ENCODE measurements at regions of chr19 and their contacts with region 1.

Region 1: GRCh38 chr19:49097455-49098288 is 12.4 kb downstream of the SNRNP70 start:
- DNase-seq: peak; percentile 68
- ATAC-seq: peak; percentile 85 to 91
- H3K4me3 ChIP-seq: no peak overlapping the region
- H3K27ac ChIP-seq: no peak overlapping the region
- H3K4me1 ChIP-seq: peaks cover 8% of the 10 kb centered on the region
- H3K27me3 ChIP-seq: no peaks in the 10 kb centered on the region
- CTCF ChIP-seq: peak; percentile 99

Region 2: DNA sequence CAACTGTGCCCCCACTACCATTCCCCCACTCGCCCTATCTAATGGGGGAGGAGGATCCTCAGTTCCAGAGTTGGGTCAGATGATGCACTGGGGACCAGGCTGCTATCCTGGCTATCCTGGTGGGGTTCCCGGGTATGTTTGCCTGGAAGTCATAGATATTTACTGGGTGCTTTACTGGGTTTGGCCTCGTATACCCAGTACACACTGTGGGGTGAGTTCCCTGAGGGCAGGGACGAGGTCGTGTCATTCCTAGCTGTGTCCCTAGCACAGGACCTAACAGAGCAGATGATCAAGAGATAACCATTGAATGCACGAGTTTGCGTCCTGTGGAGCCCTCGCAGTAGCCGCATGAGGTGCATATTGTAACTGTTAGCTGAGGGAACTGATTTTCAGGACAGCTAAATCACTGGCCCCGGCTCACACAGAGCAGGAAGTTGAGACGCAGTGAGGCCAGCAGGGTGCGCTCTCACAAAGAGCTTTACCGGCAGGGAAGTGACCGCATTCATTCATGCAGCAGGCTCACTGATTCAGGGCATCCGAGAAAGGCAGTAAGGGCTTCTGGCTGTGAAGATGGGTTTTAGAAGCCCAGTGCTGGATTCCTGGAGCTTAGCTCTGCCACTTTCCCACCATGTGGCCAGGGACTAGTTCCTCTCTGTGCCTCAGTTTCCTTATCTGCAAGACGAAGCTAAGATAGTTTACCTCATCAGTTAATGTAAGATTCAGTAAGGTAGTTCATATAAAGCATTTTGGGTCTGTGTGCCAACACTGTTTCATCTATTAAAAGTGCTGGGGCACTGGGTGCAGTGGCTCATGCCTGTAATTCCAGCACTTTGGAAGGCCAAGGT is 98.0 kb before region 1 on chr19:
- intact Hi-C with region 1: no loop called
- DNase-seq: peak; percentile 75
- ATAC-seq: peak; percentile 69 to 70
- H3K4me3 ChIP-seq: no peak overlapping the region
- H3K27ac ChIP-seq: no peak overlapping the region
- H3K4me1 ChIP-seq: peaks cover 4% of the 10 kb centered on the region
- H3K27me3 ChIP-seq: no peaks in the 10 kb centered on the region
- CTCF ChIP-seq: peak; percentile 67

Region 3: DNA sequence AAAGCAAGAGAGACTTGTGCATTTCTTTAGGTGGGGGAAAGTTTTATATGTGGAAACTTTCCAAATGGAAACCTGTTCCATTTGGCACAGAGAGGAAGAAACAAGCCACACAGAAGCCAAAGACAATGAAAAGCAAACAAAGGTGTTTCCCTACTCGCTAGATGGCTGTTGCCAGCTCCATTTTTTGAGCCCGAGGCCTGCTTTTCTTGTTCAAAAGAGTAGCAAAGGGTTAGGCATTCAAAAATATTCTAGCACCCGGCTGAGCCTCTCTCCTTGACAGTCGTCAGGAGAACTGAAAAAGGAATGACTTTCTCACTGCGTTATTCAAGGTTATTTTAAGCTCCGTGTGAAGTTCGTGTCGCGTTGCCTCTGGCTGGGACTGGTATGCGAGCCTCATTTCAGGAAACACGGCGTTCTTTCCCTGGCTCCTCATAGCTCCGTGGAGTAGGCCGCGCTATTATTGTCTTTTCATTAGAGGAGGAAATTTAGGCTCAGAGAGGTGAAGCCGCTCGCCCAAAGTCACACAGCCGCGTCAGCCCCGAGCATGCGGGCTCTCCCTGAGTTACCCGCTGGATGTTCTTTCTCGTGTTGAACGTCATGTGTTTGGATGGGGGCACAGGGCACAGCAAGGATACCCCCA is 67.6 kb after region 1 on chr19:
- intact Hi-C with region 1: no loop called
- DNase-seq: no peak
- ATAC-seq: peak; percentile 71 to 75
- H3K4me3 ChIP-seq: peak overlapping the region; percentile 7
- H3K27ac ChIP-seq: peak overlapping the region; percentile 74
- H3K4me1 ChIP-seq: peaks cover 19% of the 10 kb centered on the region
- H3K27me3 ChIP-seq: no peaks in the 10 kb centered on the region
- CTCF ChIP-seq: no peak

Region 4: GRCh38 chr19:49205114-49205513 is 107.4 kb after region 1 on chr19:
- intact Hi-C with region 1: loop called (anchors 5 kb)
- DNase-seq: no peak
- ATAC-seq: no peak
- H3K4me3 ChIP-seq: no peak overlapping the region
- H3K27ac ChIP-seq: no peak overlapping the region
- H3K4me1 ChIP-seq: no peaks in the 10 kb centered on the region
- H3K27me3 ChIP-seq: no peaks in the 10 kb centered on the region
- CTCF ChIP-seq: no peak

Region 5: DNA sequence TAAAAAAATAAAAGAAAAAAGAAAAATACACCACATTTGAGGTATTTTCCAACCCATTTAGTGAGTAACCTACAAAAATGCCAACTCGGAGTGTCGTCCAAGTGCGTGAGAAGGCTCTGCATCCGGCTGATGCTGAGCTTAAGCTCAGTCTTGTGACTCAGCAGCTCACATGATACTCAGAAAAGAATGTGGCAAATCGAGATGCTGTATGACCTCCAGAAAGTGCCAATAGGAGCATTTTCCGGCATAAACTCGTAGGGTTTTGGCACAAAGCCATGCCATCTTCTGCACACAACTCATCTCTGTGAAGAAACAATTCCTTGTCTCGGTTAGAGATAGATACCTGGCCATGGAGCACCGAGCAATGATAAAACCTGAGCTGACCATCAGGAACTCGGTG is 118.4 kb after region 1 on chr19:
- intact Hi-C with region 1: no loop called
- DNase-seq: no peak
- ATAC-seq: no peak
- H3K4me3 ChIP-seq: no peak overlapping the region
- H3K27ac ChIP-seq: no peak overlapping the region
- H3K4me1 ChIP-seq: peaks cover 4% of the 10 kb centered on the region
- H3K27me3 ChIP-seq: no peaks in the 10 kb centered on the region
- CTCF ChIP-seq: no peak

Region 6: GRCh38 chr19:49443366-49444099 is 345.9 kb after region 1 on chr19:
- intact Hi-C with region 1: no loop called
- DNase-seq: peak; percentile 97
- ATAC-seq: peak; percentile 95
- H3K4me3 ChIP-seq: peak overlapping the region; percentile 86
- H3K27ac ChIP-seq: peak overlapping the region; percentile 72
- H3K4me1 ChIP-seq: peaks cover 7% of the 10 kb centered on the region
- H3K27me3 ChIP-seq: peaks cover 35% of the 10 kb centered on the region
- CTCF ChIP-seq: peak; percentile 89

Measured in lower lobe of right lung (tissue), 2 donors.